Activated naive CD4-positive, alpha-beta T cell treated with anti-CD3 and anti-CD28 coated beads for 36 hours (primary cell): ENCODE measurements at regions of chr2 and their contacts with region 1.

Region 1: GRCh38 chr2:147623328-147623727 is 221.5 kb upstream of the ACVR2A start:
- DNase-seq: peak; percentile 44
- H3K4me3 Mint-ChIP-seq: no peak overlapping the region
- H3K27ac Mint-ChIP-seq: peak overlapping the region; percentile 79
- H3K4me1 Mint-ChIP-seq: peaks cover 43% of the 10 kb centered on the region
- H3K27me3 Mint-ChIP-seq: no peaks in the 10 kb centered on the region

Region 2: GRCh38 chr2:147416099-147416498 is 207.2 kb before region 1 on chr2:
- CTCF ChIA-PET with region 1: no interaction called
- intact Hi-C with region 1: loop called (anchors 2 kb)
- DNase-seq: no peak
- H3K4me3 Mint-ChIP-seq: no peak overlapping the region
- H3K27ac Mint-ChIP-seq: no peak overlapping the region
- H3K4me1 Mint-ChIP-seq: peaks cover 19% of the 10 kb centered on the region
- H3K27me3 Mint-ChIP-seq: no peaks in the 10 kb centered on the region

Region 3: DNA sequence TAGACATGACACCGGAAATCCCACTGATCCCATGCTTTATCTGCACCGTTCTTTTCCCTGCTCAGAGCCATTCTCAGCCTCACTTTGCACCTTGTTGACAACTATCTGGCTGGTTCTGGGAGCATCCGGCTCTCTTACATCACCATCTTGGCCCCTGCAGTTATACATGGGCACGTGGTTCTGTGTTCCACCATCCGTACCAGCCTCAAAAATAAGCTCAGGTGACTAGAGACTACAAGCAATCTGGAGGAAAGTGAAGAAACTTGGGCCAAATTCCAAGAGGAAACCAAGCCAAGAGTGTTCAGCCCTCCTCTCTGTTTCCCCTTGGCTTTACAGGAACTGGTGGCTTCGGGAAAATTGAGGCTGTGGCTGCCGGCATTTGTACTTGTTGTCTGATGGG is 23.1 kb before region 1 on chr2:
- CTCF ChIA-PET with region 1: no interaction called
- intact Hi-C with region 1: no loop called
- DNase-seq: no peak
- H3K4me3 Mint-ChIP-seq: no peak overlapping the region
- H3K27ac Mint-ChIP-seq: no peak overlapping the region
- H3K4me1 Mint-ChIP-seq: no peaks in the 10 kb centered on the region
- H3K27me3 Mint-ChIP-seq: no peaks in the 10 kb centered on the region